CD4-positive, alpha-beta memory T cell (primary cell): ENCODE measurements at regions of chrX and their contacts with region 1.

Region 1: GRCh38 chrX:72126539-72127140 is 5.1 kb downstream of the RTL5 start:
- DNase-seq: peak; percentile 75 to 82 (median 79)
- H3K4me3 ChIP-seq: no peak overlapping the region
- H3K4me3 Mint-ChIP-seq: peak overlapping the region in 4 of 8 donors; percentile 10 to 52 (median 45)
- H3K27ac ChIP-seq: no peak overlapping the region
- H3K27ac Mint-ChIP-seq: peak overlapping the region; percentile 68 to 85 (median 77)
- H3K4me1 ChIP-seq: peaks cover 55% of the 10 kb centered on the region
- H3K4me1 Mint-ChIP-seq: peaks cover 33 to 71% (median 49%) of the 10 kb centered on the region in 4 donors
- H3K27me3 ChIP-seq: no peaks in the 10 kb centered on the region
- H3K27me3 Mint-ChIP-seq: peaks cover 0 to 1% of the 10 kb centered on the region in 2 donors

Region 2: DNA sequence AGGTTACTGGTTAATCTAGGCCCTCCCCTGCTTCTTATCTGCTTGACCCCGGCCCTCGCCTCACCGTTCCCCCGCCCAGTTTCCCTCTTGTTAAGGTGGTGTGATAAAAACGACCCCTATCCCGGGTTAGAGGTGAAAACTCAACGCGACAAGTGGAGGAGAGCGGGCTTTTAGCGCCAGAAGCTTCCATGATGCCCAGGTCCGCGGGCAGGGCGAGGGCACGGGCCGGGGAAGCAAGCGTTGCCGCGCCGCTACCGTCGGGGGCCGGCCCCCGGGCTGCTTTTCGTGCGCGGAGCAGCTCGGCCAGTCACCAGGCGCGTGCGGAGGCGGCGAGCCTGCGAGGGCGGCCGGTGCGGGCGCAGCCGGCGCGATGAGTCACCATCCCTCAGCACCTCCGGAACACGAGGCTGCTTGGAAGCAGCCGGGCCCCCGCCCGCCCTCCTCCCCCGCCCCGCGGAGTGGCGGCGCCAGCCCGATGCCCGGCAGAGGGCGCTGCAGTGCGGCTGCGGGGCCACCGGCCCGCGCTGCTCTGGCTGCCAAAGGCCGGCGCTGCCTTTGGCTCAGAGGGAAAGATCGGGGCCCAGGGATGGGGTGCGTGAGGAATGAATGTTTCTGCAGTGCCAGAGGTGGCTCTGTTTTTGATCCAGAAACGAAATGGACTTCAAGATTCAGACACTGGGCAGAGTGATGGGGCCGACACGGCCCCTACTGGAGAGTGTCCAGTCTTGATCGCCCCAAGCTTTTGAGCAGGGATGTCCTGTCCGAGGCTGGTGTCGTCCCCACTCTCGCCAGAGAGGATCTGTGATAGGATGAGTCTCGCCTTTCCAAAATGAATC is 108.1 kb before region 1 on chrX:
- CTCF ChIA-PET with region 1: interaction called, 241 read pairs
- POLR2A ChIA-PET with region 1: interaction called, 48 read pairs
- intact Hi-C with region 1: loop called (anchors 1 kb)
- DNase-seq: peak; percentile 76 to 85 (median 81)
- H3K4me3 ChIP-seq: no peak overlapping the region
- H3K4me3 Mint-ChIP-seq: peak overlapping the region in 5 of 8 donors; percentile 13 to 54 (median 44)
- H3K27ac ChIP-seq: no peak overlapping the region
- H3K27ac Mint-ChIP-seq: peak overlapping the region in 5 of 7 donors; percentile 51 to 83 (median 64)
- H3K4me1 ChIP-seq: peaks cover 30% of the 10 kb centered on the region
- H3K4me1 Mint-ChIP-seq: peaks cover 16 to 38% (median 24%) of the 10 kb centered on the region in 4 donors
- H3K27me3 ChIP-seq: no peaks in the 10 kb centered on the region
- H3K27me3 Mint-ChIP-seq: no peaks in the 10 kb centered on the region

Region 3: GRCh38 chrX:72094894-72095293 is 31.7 kb before region 1 on chrX:
- CTCF ChIA-PET with region 1: interaction called, 11 read pairs
- POLR2A ChIA-PET with region 1: interaction called, 116 read pairs
- intact Hi-C with region 1: loop called (anchors 2 kb)
- DNase-seq: peak; percentile 81 to 92 (median 86)
- H3K4me3 ChIP-seq: no peak overlapping the region
- H3K4me3 Mint-ChIP-seq: peak overlapping the region in 6 of 8 donors; percentile 5 to 61 (median 42)
- H3K27ac ChIP-seq: peak overlapping the region; percentile 69
- H3K27ac Mint-ChIP-seq: peak overlapping the region; percentile 69 to 97 (median 93)
- H3K4me1 ChIP-seq: peaks cover 37% of the 10 kb centered on the region
- H3K4me1 Mint-ChIP-seq: peaks cover 15 to 39% (median 28%) of the 10 kb centered on the region in 4 donors
- H3K27me3 ChIP-seq: no peaks in the 10 kb centered on the region
- H3K27me3 Mint-ChIP-seq: no peaks in the 10 kb centered on the region

Region 4: DNA sequence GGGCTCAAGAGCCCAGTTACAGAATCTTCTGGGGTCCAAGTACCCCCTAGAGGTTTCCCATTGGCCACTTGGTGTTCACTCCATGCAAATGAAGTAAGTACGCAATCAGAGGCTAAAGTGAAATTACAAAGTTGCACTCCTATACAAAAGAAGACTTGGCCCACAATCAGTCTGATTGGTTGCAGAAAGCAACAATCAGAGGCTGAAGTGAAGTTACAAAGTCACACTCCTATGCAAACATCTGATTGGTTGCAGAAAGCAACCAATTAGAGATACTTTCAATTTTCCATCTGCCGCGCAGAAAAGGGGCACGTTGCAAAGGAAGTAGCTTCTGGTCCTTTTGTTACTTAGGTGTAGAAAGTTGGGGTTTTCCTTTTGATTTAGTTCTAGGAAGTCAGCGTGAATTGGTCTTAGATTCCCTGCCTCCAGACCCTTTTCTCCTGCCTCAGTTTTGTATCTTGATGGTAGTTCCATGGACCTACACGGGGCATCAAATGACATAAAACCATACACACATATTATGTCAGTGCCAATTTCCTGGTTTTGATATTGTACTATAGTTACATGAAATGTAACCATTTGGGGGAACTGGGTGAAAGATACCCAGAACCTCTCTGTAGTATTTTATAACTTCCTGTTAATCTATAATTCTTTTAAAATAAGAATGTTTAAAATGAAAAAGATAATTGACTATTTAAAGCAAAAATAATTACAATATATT is 42.5 kb after region 1 on chrX:
- CTCF ChIA-PET with region 1: interaction called, 3 read pairs
- POLR2A ChIA-PET with region 1: interaction called, 3 read pairs
- intact Hi-C with region 1: loop called (anchors 5 kb)
- DNase-seq: peak; percentile 61 to 77 (median 70)
- H3K4me3 ChIP-seq: peak overlapping the region in 1 of 2 donors; percentile 25
- H3K4me3 Mint-ChIP-seq: peak overlapping the region; percentile 74 to 88 (median 86)
- H3K27ac ChIP-seq: peak overlapping the region; percentile 56
- H3K27ac Mint-ChIP-seq: peak overlapping the region; percentile 75 to 99 (median 97)
- H3K4me1 ChIP-seq: peaks cover 4% of the 10 kb centered on the region
- H3K4me1 Mint-ChIP-seq: peaks cover 0 to 11% (median 6%) of the 10 kb centered on the region in 4 donors
- H3K27me3 ChIP-seq: no peaks in the 10 kb centered on the region
- H3K27me3 Mint-ChIP-seq: no peaks in the 10 kb centered on the region

Region 5: DNA sequence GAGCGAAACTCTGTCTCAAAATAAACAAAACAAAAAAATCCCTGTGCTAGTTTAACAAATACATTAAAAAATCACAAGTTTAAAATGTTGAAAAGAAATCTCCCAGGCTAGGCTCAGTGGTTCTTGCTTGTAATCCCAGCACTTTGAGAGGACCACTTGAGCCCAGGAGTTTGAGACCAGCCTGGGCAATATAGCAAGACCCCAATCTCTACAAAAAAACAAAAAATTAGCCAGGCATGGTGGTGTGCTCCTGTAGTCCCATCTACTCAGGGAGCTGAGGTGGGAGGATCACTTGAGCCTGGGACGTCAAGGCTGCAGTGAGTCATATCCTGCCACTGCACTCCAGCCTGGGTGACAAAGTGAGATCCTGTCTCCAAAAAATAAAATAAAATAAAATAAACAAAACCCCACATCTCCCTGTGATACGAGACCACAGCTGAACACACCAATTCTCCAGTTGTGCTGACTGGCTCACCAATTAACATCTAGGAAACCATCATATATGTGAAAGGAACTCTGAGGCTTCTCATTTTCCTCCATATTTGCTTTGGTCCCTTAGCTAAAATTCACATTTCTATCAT is 143.1 kb after region 1 on chrX:
- CTCF ChIA-PET with region 1: no interaction called
- POLR2A ChIA-PET with region 1: no interaction called
- intact Hi-C with region 1: loop called (anchors 10 kb)
- DNase-seq: peak in 1 of 5 donors; percentile 60
- H3K4me3 ChIP-seq: no peak overlapping the region
- H3K4me3 Mint-ChIP-seq: no peak overlapping the region
- H3K27ac ChIP-seq: no peak overlapping the region
- H3K27ac Mint-ChIP-seq: peak overlapping the region; percentile 37 to 81 (median 60)
- H3K4me1 ChIP-seq: peaks cover 26% of the 10 kb centered on the region
- H3K4me1 Mint-ChIP-seq: peaks cover 19 to 33% (median 27%) of the 10 kb centered on the region in 4 donors
- H3K27me3 ChIP-seq: no peaks in the 10 kb centered on the region
- H3K27me3 Mint-ChIP-seq: no peaks in the 10 kb centered on the region

Region 6: GRCh38 chrX:72641606-72642005 is 515.0 kb after region 1 on chrX:
- CTCF ChIA-PET with region 1: no interaction called
- POLR2A ChIA-PET with region 1: no interaction called
- intact Hi-C with region 1: no loop called
- DNase-seq: no peak
- H3K4me3 ChIP-seq: no peak overlapping the region
- H3K4me3 Mint-ChIP-seq: no peak overlapping the region
- H3K27ac ChIP-seq: no peak overlapping the region
- H3K27ac Mint-ChIP-seq: no peak overlapping the region
- H3K4me1 ChIP-seq: no peaks in the 10 kb centered on the region
- H3K4me1 Mint-ChIP-seq: no peaks in the 10 kb centered on the region
- H3K27me3 ChIP-seq: no peaks in the 10 kb centered on the region
- H3K27me3 Mint-ChIP-seq: no peaks in the 10 kb centered on the region